ENCODE measurements at regions of chr7 and their contacts with region 1.

Region 1: DNA sequence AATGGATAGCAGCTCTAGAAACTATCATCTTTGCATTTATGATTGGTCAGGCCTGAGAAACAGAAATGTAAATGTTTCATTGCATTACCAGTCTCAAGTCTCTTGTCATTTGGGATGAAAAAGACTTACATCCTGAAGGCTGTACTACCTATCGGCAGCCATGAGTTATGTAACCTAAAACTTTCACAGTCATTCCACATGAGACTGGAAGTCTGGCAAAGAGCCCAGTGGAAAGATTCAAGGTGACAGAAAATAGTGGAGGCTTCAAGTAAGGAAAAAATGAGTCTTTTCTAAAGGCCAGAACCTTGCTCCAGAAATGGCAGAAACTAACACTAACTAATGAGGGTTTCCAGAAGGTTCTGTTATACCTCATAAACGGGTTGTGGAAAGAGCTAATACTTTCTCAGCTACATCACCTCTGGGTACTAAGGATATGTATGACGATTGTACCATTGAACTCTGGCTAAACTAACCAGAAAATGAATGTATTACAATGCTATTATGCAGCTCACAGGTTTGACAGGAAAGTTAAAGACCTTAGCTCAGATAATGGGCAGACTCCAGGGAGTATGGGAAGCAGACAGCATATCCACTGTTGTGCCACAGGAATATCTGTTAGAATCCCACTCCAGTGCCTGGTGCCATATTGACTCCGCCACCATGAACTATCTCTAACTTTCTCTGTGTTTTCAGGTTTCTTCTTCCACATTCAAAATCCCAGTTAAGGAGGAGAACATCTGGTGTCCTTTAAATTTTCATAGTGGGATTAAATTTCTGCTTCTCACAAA is 41.7 kb upstream of the DYNC1I1 start:
- DNase-seq: no peak
- H3K4me3 ChIP-seq: no peak overlapping the region
- H3K4me3 Mint-ChIP-seq: no peak overlapping the region
- H3K27ac Mint-ChIP-seq: no peak overlapping the region
- H3K4me1 ChIP-seq: no peaks in the 10 kb centered on the region
- H3K4me1 Mint-ChIP-seq: no peaks in the 10 kb centered on the region
- H3K27me3 ChIP-seq: no peaks in the 10 kb centered on the region
- H3K27me3 Mint-ChIP-seq: peaks cover 15% of the 10 kb centered on the region
- CTCF ChIP-seq: no peak

Region 2: GRCh38 chr7:95700917-95701316 is 29.8 kb before region 1 on chr7:
- CTCF ChIA-PET with region 1: no interaction called
- POLR2A ChIA-PET with region 1: no interaction called
- intact Hi-C with region 1: loop called (anchors 1 kb)
- DNase-seq: no peak
- H3K4me3 ChIP-seq: no peak overlapping the region
- H3K4me3 Mint-ChIP-seq: no peak overlapping the region
- H3K27ac Mint-ChIP-seq: no peak overlapping the region
- H3K4me1 ChIP-seq: no peaks in the 10 kb centered on the region
- H3K4me1 Mint-ChIP-seq: no peaks in the 10 kb centered on the region
- H3K27me3 ChIP-seq: no peaks in the 10 kb centered on the region
- H3K27me3 Mint-ChIP-seq: peaks cover 15% of the 10 kb centered on the region
- CTCF ChIP-seq: no peak

Region 3: DNA sequence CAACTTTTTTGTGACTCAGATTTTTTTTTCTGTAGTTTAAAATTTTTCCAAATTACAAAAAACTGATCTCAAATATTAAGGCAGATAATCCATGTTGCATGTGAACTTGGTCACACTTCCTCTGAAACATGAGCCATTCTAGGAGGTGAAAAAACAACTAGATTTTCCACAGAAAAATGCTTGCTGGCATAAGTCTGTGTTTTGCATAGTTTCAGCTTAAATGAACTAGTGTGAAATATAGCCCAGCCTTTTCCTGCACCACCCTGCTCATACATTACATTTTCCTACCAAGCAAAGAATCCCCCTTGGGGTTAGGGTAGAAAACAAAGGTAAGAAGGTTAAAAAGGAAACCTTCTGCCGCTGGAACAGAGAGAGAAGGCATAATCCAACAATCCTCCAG is 543.0 kb after region 1 on chr7:
- CTCF ChIA-PET with region 1: no interaction called
- POLR2A ChIA-PET with region 1: no interaction called
- intact Hi-C with region 1: no loop called
- DNase-seq: no peak
- H3K4me3 ChIP-seq: no peak overlapping the region
- H3K4me3 Mint-ChIP-seq: no peak overlapping the region
- H3K27ac Mint-ChIP-seq: no peak overlapping the region
- H3K4me1 ChIP-seq: peaks cover 12% of the 10 kb centered on the region; the same call in 1 of the 2 replicates
- H3K4me1 Mint-ChIP-seq: peaks cover 16% of the 10 kb centered on the region
- H3K27me3 ChIP-seq: no peaks in the 10 kb centered on the region
- H3K27me3 Mint-ChIP-seq: no peaks in the 10 kb centered on the region
- CTCF ChIP-seq: no peak

Measured in Caco-2 (cell line).